H1 (cell line): ENCODE measurements at regions of chr18 and their contacts with region 1.

Region 1: DNA sequence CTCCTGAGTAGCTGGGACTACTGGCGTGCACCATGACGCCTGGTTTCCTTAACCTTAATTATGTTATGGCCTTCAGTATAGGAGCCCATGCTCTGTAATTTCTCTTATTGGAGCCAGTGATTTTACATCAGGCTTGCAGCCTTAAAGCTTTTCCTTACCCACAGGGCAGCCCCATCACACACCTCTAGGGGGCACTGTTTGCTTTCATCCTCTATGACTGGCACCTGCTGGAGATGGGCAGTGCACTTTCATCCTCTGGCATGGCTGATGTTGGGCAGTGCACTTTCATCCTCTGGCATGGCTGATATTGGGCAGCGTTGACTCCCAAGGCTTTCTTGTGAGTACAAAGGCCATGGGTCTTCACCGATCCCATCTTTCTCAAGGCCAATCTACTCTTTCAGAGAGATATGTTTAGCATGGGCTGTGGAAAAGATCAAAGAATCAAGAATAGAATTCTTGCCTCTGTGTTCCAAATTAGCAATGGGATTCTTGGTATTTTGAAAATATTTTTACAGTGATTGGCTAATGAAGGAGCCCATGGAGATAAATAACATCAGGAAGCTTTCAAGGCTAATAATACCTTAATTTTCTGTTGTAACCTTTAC is 80.7 kb upstream of the MEX3C start:
- DNase-seq: peak; percentile 27 to 92
- H3K4me3 ChIP-seq: no peak overlapping the region
- H3K27ac ChIP-seq: no peak overlapping the region
- H3K4me1 ChIP-seq: peaks cover 0 to 11% (median 3%) of the 10 kb centered on the region in 4 experiments; a peak in 3 of 7 replicates
- H3K27me3 ChIP-seq: no peaks in the 10 kb centered on the region
- CTCF ChIP-seq: peak; percentile 83 to 94 (median 93)
- EP300 ChIP-seq: no peak
- POLR2A ChIP-seq: no peak
- RAD21 ChIP-seq: peak; percentile 89 to 95

Region 2: DNA sequence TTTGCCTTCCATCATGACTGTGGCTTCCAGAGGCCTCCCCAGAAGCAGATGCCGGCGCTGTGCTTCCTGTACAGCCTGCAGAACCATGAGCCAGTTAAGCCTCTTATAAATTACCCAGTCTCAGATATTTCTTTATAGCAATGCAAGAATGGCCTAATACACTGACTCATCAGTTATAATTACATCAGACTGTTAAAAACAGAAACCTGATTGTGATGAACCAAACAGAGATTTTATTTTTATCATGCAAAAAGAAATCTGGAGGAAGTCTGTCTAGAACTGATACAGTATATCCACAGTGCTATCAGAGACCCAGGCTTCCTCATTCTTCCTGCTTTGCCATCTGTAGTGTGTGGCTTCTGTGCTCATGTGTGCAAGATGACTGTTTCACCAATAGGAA is 12.7 kb after region 1 on chr18:
- CTCF ChIA-PET with region 1: interaction called, 13 read pairs
- POLR2A ChIA-PET with region 1: no interaction called
- DNase-seq: no peak
- H3K4me3 ChIP-seq: no peak overlapping the region
- H3K27ac ChIP-seq: no peak overlapping the region
- H3K4me1 ChIP-seq: no peaks in the 10 kb centered on the region
- H3K27me3 ChIP-seq: no peaks in the 10 kb centered on the region
- CTCF ChIP-seq: no peak
- EP300 ChIP-seq: no peak
- POLR2A ChIP-seq: no peak
- RAD21 ChIP-seq: no peak